Head of caudate nucleus (tissue), 42 donors: ENCODE measurements at regions of chr6 and their contacts with region 1.

Region 1: GRCh38 chr6:56708810-56709597 is 66.3 kb upstream of the DST start:
- DNase-seq: no peak

Region 2: GRCh38 chr6:56757588-56757984 is 48.6 kb after region 1 on chr6:
- intact Hi-C with region 1: loop called (anchors 5 kb)
- DNase-seq: peak in 24 of 42 donors; percentile 31 to 82 (median 59)

Region 3: GRCh38 chr6:56851541-56852259 is 142.7 kb after region 1 on chr6:
- intact Hi-C with region 1: loop called (anchors 5 kb)
- DNase-seq: peak; percentile 25 to 88 (median 62)